ENCODE measurements at regions of chr5 and their contacts with region 1.

Region 1: GRCh38 chr5:111158105-111158744 is 66.0 kb upstream of the CAMK4 start:
- DNase-seq: peak; percentile 66 to 79 (median 72)
- H3K4me3 ChIP-seq: no peak overlapping the region
- H3K4me3 Mint-ChIP-seq: peak overlapping the region in 1 of 8 donors; percentile 15
- H3K27ac ChIP-seq: no peak overlapping the region
- H3K27ac Mint-ChIP-seq: no peak overlapping the region
- H3K4me1 ChIP-seq: no peaks in the 10 kb centered on the region
- H3K4me1 Mint-ChIP-seq: peaks cover 0 to 6% (median 3%) of the 10 kb centered on the region in 4 donors
- H3K27me3 ChIP-seq: no peaks in the 10 kb centered on the region
- H3K27me3 Mint-ChIP-seq: peaks cover 4 to 7% of the 10 kb centered on the region in 2 donors

Region 2: GRCh38 chr5:111478266-111478665 is 320.0 kb after region 1 on chr5:
- CTCF ChIA-PET with region 1: interaction called, 7 read pairs
- POLR2A ChIA-PET with region 1: no interaction called
- intact Hi-C with region 1: loop called (anchors 2 kb)
- DNase-seq: no peak
- H3K4me3 ChIP-seq: no peak overlapping the region
- H3K4me3 Mint-ChIP-seq: no peak overlapping the region
- H3K27ac ChIP-seq: no peak overlapping the region
- H3K27ac Mint-ChIP-seq: no peak overlapping the region
- H3K4me1 ChIP-seq: no peaks in the 10 kb centered on the region
- H3K4me1 Mint-ChIP-seq: peaks cover 0 to 11% (median 3%) of the 10 kb centered on the region in 4 donors
- H3K27me3 ChIP-seq: no peaks in the 10 kb centered on the region
- H3K27me3 Mint-ChIP-seq: no peaks in the 10 kb centered on the region

Measured in CD4-positive, alpha-beta memory T cell (primary cell).